Psoas muscle (tissue), 8 donors: ENCODE measurements at regions of chr3 and their contacts with region 1.

Region 1: DNA sequence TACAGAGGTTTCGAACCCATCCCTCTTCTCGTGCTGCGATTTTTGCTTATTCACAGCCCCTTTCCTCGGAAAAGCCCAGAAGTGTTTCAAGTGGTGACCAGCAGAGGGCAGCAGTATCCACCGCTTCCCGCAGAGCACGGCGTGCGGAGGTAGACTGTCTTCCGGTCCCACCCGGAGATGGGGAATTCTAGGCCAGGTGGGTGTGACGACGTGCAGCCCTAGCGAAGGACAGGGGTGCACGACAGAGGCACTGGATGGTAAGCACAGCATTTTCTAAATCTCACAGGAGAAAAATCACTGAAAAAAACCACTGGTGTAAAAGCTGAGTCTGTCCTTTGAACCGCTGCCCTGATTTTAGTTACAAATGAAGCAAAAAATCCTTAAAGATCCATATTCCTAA is 7.4 kb upstream of the PSMD6 start:
- DNase-seq: peak; percentile 67 to 80
- ATAC-seq: peak; percentile 82 to 98 (median 92)
- H3K4me3 ChIP-seq: peak overlapping the region; percentile 56
- H3K27ac ChIP-seq: no peak overlapping the region
- H3K4me1 ChIP-seq: no peaks in the 10 kb centered on the region
- H3K27me3 ChIP-seq: peaks cover 0 to 1% (median 0%) of the 10 kb centered on the region in 3 donors
- CTCF ChIP-seq: peak; percentile 88

Region 2: DNA sequence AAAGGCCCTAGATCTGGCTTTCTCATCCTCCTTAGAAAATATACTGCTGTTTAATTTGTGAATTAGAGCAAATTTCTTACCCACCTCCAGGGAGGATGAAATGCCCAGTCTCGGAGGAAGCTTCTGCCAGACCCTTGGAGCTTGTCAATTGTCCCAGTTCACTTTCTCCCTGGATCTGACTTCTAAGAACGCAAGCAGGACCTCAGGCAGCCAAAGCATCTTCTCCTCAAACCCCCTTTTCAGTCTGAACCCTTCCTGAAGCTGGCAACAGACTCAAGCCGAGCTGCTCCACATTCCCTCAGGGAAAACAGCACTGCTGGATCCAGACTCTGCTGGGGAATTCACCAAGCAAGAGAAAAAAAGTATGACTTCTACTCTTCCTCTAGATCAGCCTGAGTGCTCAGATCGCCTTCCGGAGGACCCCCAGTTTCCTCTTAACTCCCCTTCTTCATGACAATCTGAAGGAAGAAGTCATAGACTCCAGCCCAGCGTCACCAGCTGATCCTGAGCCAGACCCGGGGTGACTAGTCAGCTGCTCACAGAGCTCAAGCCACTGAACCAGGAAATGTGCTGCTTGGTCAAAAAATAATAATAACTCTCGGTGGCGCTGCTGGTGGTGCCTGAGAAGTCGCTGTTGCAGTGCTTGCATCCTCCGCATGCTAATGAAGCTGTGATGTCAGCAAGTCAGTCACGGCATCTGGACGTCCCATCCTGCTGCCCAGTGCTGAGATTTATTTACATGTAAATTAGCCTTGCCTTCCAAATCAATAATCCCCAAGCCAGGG is 194.3 kb after region 1 on chr3 and contains the start of gene PRICKLE2:
- intact Hi-C with region 1: loop called in 1 of 2 experiments (anchors 5 kb)
- DNase-seq: peak; percentile 77 to 87
- ATAC-seq: peak; percentile 36 to 81 (median 70)
- H3K4me3 ChIP-seq: peak within 1 kb of the TSS; percentile 53
- H3K27ac ChIP-seq: peak within 1 kb of the TSS; percentile 56
- H3K4me1 ChIP-seq: peaks cover under 1% of the 10 kb centered on the region
- H3K27me3 ChIP-seq: no peaks in the 10 kb centered on the region
- CTCF ChIP-seq: peak; percentile 6
- total RNA-seq, gene PRICKLE2: 2.2 to 4.9 (median 3.1) TPM

Region 3: DNA sequence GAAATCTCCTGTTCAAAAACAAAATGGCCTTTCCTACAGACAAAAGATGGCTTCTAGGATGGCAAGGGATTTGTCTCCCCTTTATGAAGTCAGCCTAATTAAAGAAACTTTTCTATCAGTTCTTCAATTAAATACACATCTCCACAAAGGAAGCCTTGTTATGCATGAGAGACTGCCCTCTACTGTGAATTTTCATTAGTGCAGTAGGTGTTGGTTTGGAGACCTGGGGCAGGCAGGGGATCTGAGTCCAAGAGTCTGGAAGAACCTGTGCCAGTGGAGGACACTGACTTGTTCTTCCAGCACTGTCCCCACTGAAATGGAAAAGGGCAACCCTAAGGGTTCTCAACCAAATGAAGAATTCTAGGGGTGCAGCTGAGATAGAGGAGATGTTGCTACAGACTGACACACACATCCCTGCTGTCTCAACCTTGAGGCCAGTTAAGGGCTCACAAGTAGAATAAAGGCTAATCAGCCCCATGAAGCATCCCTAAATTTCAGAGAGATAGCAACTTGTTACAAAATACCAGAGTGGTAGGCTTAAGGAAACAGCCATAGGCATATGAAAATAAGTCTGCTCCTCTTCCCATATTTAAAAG is 368.6 kb after region 1 on chr3:
- intact Hi-C with region 1: loop called in 1 of 2 experiments (anchors 2 kb)
- DNase-seq: no peak
- ATAC-seq: peak in 1 of 4 donors; percentile 58
- H3K4me3 ChIP-seq: no peak overlapping the region
- H3K27ac ChIP-seq: no peak overlapping the region
- H3K4me1 ChIP-seq: no peaks in the 10 kb centered on the region
- H3K27me3 ChIP-seq: no peaks in the 10 kb centered on the region
- CTCF ChIP-seq: peak; percentile 49

Region 4: GRCh38 chr3:64484289-64484992 is 453.7 kb after region 1 on chr3:
- intact Hi-C with region 1: loop called (anchors 1 to 2 kb)
- DNase-seq: peak; percentile 74 to 85
- ATAC-seq: peak; percentile 91 to 98 (median 92)
- H3K4me3 ChIP-seq: no peak overlapping the region
- H3K27ac ChIP-seq: no peak overlapping the region
- H3K4me1 ChIP-seq: no peaks in the 10 kb centered on the region
- H3K27me3 ChIP-seq: peaks cover 0 to 5% (median 2%) of the 10 kb centered on the region in 3 donors
- CTCF ChIP-seq: peak; percentile 90